ENCODE measurements at regions of chr1 and their contacts with region 1.

Region 1: DNA sequence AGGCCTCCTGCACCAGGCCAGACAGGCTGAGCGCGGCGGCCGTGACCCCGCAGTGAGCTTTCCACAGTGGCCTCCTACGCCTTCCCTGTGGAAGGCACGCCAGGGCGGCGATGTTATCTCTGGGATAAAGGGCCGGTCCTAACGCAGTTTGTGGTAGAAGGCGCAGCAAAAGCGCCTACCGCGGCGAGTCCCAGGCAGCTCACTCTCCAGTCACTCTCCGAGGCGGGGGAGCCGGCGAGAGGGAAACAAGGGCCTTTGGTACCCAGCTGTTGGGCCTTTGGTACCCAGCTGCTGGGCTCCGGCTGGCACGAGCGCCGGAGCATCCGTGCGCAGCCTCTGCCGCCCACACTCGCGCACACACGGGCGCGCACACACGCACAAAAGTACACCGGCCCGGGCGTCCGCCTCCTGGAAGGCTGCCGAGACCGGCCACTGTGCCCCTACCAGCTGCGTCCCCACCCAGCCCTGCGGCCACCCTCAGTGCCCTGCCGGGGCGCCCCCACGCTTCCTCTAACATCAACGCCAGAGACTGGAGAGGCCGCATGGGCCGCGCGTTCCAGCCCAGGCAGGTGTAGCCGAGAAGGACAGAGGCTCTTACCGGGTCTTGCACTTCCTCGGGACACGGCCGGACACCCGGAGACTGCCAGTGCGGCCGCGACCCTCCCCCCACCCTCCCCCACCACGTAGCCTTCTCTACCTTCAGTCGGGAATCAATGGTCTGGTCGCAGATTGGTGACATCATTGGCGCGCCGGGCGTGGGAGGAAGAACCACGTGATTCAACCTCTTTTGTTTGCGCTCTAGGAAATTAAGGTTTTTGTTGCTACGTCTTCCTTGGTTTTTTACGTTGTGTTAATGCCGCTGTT is 19.5 kb upstream of the ADAR start:
- DNase-seq: peak; percentile 80 to 95 (median 92)
- ATAC-seq: peak; percentile 65
- H3K4me3 ChIP-seq: peak overlapping the region; percentile 93 to 94
- H3K4me3 Mint-ChIP-seq: peak overlapping the region; percentile 98
- H3K27ac ChIP-seq: peak overlapping the region; percentile 93 to 95
- H3K27ac Mint-ChIP-seq: peak overlapping the region; percentile 100
- H3K4me1 ChIP-seq: peaks cover 20% of the 10 kb centered on the region
- H3K4me1 Mint-ChIP-seq: peaks cover 43% of the 10 kb centered on the region
- H3K27me3 ChIP-seq: no peaks in the 10 kb centered on the region
- H3K27me3 Mint-ChIP-seq: peaks cover 8% of the 10 kb centered on the region
- CTCF ChIP-seq: no peak

Region 2: DNA sequence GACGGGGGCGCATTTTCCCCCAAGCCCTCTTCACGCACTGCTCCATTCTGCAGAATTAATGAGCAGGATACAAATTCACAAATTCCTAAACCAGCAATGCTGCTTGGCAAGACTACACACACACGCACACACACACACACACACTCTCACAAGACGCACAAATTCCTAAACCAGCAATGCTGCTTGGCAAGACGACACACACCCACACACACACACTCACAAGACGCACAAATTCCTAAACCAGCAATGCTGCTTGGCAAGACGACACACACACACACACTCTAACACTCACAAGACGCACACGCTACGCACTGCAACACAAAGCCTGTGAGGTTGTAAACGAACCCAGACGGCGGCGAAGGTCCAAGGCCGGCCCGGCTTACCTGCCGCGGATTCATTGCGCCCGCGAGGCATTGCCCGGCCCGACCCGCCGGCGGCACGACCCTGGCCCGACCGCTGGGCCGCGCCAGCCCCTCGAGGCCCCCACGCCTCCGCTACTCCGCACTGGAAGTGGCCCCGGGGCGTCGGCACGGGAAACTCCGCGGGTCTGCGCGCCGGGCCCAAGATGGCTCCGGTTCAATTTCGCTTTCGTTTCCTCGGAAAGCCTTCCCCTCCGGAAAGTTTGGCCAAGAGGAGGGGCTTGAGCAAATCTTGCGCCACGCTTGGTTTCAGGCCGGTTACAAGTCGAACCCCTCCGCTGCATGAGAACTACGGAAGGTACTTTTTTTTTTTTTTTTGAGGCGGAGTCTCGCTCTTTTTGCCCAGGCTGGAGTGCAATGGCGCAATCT is 19.7 kb before region 1 on chr1 and contains the start of gene ADAR:
- CTCF ChIA-PET with region 1: interaction called, 5 read pairs
- POLR2A ChIA-PET with region 1: interaction called, 7 read pairs
- intact Hi-C with region 1: loop called (anchors 1 kb)
- DNase-seq: peak; percentile 72 to 98 (median 87)
- ATAC-seq: peak; percentile 85
- H3K4me3 ChIP-seq: peak within 1 kb of the TSS; percentile 89 to 90
- H3K4me3 Mint-ChIP-seq: peak within 1 kb of the TSS; percentile 98
- H3K27ac ChIP-seq: peak within 1 kb of the TSS; percentile 92 to 96
- H3K27ac Mint-ChIP-seq: peak within 1 kb of the TSS; percentile 98
- H3K4me1 ChIP-seq: peaks cover 59% of the 10 kb centered on the region
- H3K4me1 Mint-ChIP-seq: peaks cover 73% of the 10 kb centered on the region
- H3K27me3 ChIP-seq: no peaks in the 10 kb centered on the region
- H3K27me3 Mint-ChIP-seq: no peaks in the 10 kb centered on the region
- CTCF ChIP-seq: no peak
- total RNA-seq, gene ADAR: 221 to 238 TPM

Region 3: GRCh38 chr1:154751690-154752089 is 124.2 kb after region 1 on chr1:
- CTCF ChIA-PET with region 1: no interaction called
- POLR2A ChIA-PET with region 1: no interaction called
- intact Hi-C with region 1: no loop called
- DNase-seq: no peak
- ATAC-seq: no peak
- H3K4me3 ChIP-seq: no peak overlapping the region
- H3K4me3 Mint-ChIP-seq: no peak overlapping the region
- H3K27ac ChIP-seq: no peak overlapping the region
- H3K27ac Mint-ChIP-seq: no peak overlapping the region
- H3K4me1 ChIP-seq: peaks cover 21% of the 10 kb centered on the region
- H3K4me1 Mint-ChIP-seq: peaks cover 31% of the 10 kb centered on the region
- H3K27me3 ChIP-seq: peaks cover 0 to 2% of the 10 kb centered on the region in 2 experiments
- H3K27me3 Mint-ChIP-seq: no peaks in the 10 kb centered on the region
- CTCF ChIP-seq: no peak

Region 4: DNA sequence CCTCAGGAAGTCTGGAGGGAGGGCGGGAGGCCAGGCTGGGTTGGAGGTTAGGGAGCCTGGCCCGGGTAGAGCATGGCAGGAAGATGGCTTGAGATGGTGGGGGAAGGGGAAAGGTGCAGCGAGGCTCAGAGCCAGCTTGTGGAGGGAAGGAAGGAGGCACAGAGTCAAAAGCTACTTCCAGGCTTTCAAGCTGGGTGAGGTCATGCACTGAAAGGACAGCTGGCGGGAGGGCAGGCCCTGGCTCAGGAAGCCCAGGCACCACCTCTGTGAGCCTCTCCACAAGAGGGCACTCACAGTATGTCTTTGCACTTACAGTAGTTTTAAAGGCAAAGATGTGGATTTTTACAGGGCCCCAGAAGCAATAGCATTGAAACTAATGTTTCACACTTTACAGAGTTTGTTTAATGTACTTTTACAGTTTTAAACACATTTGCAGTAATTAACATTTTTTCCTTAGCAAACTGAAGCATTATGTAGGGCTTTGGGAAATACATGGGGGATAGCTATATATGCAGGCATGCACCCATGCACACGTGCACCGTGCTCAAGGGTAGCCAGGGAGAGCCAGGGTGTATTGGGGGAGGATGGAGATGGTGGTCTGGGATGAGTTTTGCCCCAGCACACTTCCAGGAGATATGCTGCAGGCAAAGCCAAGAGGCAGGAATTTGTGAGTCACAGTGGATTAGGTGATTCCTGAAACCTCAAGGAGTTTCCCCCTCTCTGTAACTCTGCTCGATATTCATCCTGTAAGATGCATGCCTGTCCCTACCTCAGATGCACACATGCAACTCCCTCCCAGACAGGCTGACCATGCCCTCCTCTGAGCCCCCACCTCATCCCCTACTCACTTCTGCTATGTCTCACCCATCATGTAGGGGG is 417.6 kb after region 1 on chr1:
- CTCF ChIA-PET with region 1: no interaction called
- POLR2A ChIA-PET with region 1: no interaction called
- intact Hi-C with region 1: no loop called
- DNase-seq: peak in 8 of 9 experiments; percentile 42 to 80 (median 64)
- ATAC-seq: peak; percentile 94
- H3K4me3 ChIP-seq: no peak overlapping the region
- H3K4me3 Mint-ChIP-seq: no peak overlapping the region
- H3K27ac ChIP-seq: no peak overlapping the region
- H3K27ac Mint-ChIP-seq: no peak overlapping the region
- H3K4me1 ChIP-seq: no peaks in the 10 kb centered on the region
- H3K4me1 Mint-ChIP-seq: peaks cover 4% of the 10 kb centered on the region
- H3K27me3 ChIP-seq: no peaks in the 10 kb centered on the region
- H3K27me3 Mint-ChIP-seq: peaks cover 3% of the 10 kb centered on the region
- CTCF ChIP-seq: peak; percentile 64

Measured in CD8-positive, alpha-beta T cell (primary cell).